ENCODE measurements at regions of chr5 and their contacts with region 1.

Region 1: GRCh38 chr5:42423285-42424165 is at the start of gene GHR:
- DNase-seq: peak; percentile 21 to 85 (median 81)
- H3K4me3 ChIP-seq: peak within 1 kb of the TSS; percentile 51 to 84 (median 68)
- H3K27ac ChIP-seq: peak within 1 kb of the TSS in 50 of 59 donors; percentile 21 to 86 (median 70)
- H3K27me3 ChIP-seq: peaks cover 0 to 9% (median 0%) of the 10 kb centered on the region in 45 donors
- CTCF ChIP-seq: peak; percentile 57 to 90 (median 79)
- total RNA-seq, gene GHR: 1.2 to 8.0 (median 4.0) TPM

Region 2: DNA sequence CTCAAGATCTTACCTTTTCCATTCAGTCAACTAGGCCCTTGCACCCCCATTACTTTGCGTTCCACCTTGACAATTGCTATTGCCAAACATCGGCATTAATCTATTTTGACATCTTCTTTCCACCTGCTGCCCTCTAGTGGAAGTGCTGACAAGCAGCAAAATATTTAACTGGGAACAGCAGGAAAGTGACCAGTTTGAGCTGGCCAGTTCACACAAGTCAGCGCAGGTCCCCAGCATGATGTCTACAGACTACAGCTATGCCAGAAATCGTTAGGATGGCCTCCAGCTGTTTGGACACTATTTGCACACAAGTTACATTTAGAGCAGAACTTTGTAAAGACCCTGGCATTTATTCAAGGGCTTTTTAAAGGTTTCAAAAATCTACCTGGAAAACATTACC is 159.8 kb after region 1 on chr5:
- intact Hi-C with region 1: loop called (anchors 5 to 10 kb)
- DNase-seq: peak in 3 of 10 donors; percentile 10 to 34 (median 28)
- H3K4me3 ChIP-seq: no peak overlapping the region
- H3K27ac ChIP-seq: no peak overlapping the region
- H3K27me3 ChIP-seq: peaks cover 0 to 5% (median 0%) of the 10 kb centered on the region in 45 donors
- CTCF ChIP-seq: peak; percentile 56 to 83 (median 76)

Region 3: DNA sequence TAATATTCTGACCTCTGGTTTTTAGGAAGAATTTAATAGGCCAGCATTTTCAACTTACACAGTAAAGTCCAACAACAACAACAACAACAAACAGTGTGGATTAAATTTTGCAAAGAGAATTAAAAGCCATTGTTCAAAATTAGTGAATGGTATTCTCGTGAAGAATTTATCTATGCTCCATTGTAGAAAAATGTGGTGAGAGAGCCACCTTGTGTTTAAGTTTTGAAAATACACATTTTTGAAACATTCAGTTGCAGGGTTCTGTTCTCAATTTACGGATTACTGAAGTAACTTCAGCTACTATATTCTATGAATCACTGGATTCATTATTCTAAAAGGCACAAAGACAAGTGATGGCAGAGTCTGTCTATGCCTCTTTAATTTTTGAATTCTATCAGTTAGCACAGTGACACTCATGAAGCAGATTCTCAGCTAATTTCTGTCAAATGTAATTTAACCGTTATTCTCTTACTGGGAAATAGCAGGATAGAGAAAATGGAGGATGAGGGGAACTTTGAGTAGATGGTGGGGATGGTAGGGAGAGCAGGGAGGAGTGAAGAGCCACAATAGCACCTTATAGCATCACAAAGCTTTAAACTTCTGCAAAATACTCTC is 344.1 kb after region 1 on chr5:
- intact Hi-C with region 1: loop called in 1 of 2 experiments (anchors 2 kb)
- DNase-seq: no peak
- H3K4me3 ChIP-seq: no peak overlapping the region
- H3K27ac ChIP-seq: no peak overlapping the region
- H3K27me3 ChIP-seq: peaks cover 0 to 4% (median 0%) of the 10 kb centered on the region in 45 donors
- CTCF ChIP-seq: peak; percentile 44 to 86 (median 70)